H1 (cell line): ENCODE measurements at regions of chr1 and their contacts with region 1.

Region 1: DNA sequence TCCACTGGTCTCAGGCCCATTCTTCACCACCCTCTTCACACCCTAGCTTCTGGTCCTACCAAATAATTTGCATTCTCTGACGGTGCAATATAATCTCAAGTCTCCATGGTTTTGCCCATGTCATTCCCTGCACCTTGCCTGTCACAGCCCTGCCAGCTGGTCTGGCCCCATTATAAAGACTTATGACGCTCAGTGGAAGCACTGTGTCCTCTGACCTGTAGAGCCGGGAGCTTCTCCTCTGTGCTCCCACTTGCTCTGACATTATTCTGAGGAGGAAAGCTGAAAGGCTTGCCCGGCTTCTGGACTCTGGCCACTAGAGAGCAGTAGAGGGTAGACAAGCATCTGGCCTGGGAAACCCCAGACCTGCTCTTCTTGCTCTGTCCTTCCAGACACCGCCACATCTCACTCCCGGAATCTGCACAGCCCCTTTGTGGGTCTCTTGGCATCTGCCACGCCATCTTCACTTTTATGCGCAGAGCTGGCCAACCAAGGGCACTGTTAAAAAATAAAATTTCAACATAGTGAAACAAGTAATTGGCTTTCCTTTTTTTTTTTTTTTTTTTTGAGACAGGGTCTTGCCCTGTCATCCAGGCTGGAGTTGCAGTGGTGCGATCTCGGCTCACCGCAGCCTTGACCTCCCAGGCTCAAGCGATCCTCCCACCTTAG is 44.4 kb downstream of the NENF start:
- DNase-seq: peak; percentile 67 to 81
- H3K4me3 ChIP-seq: no peak overlapping the region
- H3K27ac ChIP-seq: no peak overlapping the region
- H3K4me1 ChIP-seq: peaks cover 0 to 2% (median 0%) of the 10 kb centered on the region in 4 experiments; a peak in 1 of 7 replicates
- H3K27me3 ChIP-seq: no peaks in the 10 kb centered on the region
- CTCF ChIP-seq: peak; percentile 75 to 95 (median 93)
- EP300 ChIP-seq: no peak
- POLR2A ChIP-seq: no peak
- RAD21 ChIP-seq: peak; percentile 94 to 97

Region 2: DNA sequence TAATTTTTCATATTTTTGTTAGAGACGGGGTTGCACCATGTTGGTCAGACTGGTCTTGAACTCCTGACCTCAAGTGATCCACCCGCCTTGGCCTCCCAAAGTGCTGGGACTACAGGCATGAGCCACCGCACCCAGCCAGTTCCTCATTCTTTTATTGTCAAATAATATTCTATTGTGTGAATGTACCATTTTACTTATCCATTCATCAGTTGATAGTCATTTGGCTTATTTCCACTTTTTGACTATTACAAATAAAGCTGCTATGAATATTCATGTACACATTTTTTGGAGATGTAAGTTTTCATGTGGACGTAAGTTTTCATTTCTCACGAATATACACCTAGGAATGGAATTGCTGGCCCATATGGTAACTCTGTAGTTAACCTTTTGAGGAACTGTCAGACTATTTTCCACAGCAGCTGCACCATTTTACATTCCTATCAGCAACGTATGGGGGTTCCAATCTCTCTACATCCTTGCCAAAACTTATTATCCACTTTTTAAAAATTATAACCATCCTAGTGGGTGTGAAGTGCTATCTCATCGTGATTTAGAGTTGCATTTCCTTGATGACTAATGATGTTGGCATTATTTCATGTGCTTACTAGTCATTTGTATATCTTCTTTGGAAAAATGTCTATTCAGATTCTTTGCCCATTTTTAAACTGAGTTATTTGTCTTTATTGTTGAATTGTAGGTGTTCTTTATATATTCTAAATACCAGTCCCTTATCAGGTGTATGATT is 75.1 kb before region 1 on chr1:
- CTCF ChIA-PET with region 1: no interaction called
- POLR2A ChIA-PET with region 1: no interaction called
- DNase-seq: no peak
- H3K4me3 ChIP-seq: no peak overlapping the region
- H3K27ac ChIP-seq: no peak overlapping the region
- H3K4me1 ChIP-seq: no peaks in the 10 kb centered on the region
- H3K27me3 ChIP-seq: no peaks in the 10 kb centered on the region
- CTCF ChIP-seq: no peak
- EP300 ChIP-seq: no peak
- POLR2A ChIP-seq: no peak
- RAD21 ChIP-seq: no peak

Region 3: DNA sequence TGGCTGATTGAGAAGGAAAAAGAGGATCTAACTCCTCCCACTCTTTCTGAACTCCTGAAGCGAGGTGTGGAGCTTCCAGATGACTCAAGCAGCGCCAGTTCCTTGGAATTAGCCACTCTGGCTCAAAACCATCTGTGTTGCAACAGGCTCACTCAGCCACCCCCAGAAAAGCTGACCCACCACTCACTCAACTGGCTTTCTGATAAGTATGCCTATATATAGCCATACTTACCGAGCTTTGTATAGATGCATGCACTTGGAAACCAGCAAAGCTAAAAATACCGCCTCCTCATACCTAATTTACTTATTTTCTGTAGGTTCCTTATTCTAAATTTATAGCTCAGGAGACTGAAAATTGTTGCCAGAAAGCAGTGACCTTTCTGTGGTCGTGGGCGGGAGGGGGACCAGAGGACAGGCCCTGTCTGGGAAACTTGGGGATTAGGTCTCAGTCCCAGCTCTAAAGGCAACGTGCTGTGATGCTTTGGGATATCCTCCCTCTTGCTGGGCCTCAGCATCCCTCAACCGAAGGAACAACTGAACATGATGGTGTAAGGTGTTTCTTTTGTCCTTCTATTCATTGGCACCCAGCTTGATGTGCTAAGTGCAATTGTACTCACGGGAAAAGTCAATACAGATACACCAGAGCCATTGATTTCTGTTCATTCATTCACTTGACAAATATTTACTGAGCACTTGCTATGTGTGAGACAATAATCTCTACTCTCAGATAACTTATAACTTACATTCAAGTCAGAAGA is 21.3 kb after region 1 on chr1:
- CTCF ChIA-PET with region 1: interaction called, 21 read pairs
- POLR2A ChIA-PET with region 1: no interaction called
- DNase-seq: no peak
- H3K4me3 ChIP-seq: no peak overlapping the region
- H3K27ac ChIP-seq: no peak overlapping the region
- H3K4me1 ChIP-seq: no peaks in the 10 kb centered on the region
- H3K27me3 ChIP-seq: no peaks in the 10 kb centered on the region; a peak in 1 of 7 replicates
- CTCF ChIP-seq: no peak
- EP300 ChIP-seq: no peak
- POLR2A ChIP-seq: no peak
- RAD21 ChIP-seq: no peak

Region 4: DNA sequence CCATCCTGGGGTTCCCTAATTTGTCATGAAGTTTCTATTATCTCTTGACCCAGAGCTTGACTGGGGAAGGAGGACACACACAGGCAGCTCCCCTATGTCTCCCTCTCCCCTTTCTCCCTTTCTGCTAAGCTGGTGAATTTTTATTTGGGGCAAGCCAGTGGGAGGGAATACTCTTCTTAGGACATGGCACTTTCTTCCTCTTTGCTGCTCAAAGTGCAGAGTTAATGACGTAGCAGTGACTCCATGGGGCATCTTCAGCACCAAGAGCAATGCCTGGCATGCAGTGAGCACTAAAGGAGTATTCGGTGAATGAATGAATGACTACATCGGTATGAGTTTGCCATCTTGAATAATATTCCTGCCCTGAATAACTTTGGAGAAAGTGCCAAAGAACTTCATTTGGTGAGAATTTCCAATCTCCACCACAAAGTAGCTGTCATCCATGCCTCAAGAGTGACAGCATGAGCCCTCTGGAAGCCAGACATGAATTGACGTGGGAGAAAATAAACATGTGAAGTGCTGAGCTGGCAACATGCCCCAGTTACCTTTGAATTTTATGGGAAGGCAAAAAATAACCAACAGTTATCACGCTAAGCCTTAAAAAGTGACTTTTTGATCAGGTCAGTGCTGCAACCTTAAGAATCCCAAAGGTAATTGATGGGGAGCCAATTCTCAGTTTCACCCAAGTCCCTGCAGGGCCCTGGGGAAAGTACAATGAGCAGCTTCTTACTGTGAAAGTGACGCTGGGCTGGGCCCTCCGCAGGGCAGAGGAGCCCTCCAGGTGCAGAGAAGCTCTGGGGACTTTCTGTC is 109.3 kb after region 1 on chr1:
- CTCF ChIA-PET with region 1: interaction called, 12 read pairs
- POLR2A ChIA-PET with region 1: no interaction called
- DNase-seq: no peak
- H3K4me3 ChIP-seq: no peak overlapping the region
- H3K27ac ChIP-seq: no peak overlapping the region
- H3K4me1 ChIP-seq: peaks cover 0 to 9% (median 5%) of the 10 kb centered on the region in 4 experiments; a peak in 4 of 7 replicates
- H3K27me3 ChIP-seq: no peaks in the 10 kb centered on the region
- CTCF ChIP-seq: no peak
- EP300 ChIP-seq: no peak
- POLR2A ChIP-seq: no peak
- RAD21 ChIP-seq: no peak

Region 5: GRCh38 chr1:212613455-212614390 is 136.6 kb after region 1 on chr1:
- CTCF ChIA-PET with region 1: interaction called, 13 read pairs
- POLR2A ChIA-PET with region 1: interaction called, 56 read pairs
- DNase-seq: no peak
- H3K4me3 ChIP-seq: no peak overlapping the region
- H3K27ac ChIP-seq: no peak overlapping the region
- H3K4me1 ChIP-seq: peaks cover 8 to 31% (median 19%) of the 10 kb centered on the region in 4 experiments; a peak in 6 of 7 replicates
- H3K27me3 ChIP-seq: peaks cover 0 to 14% (median 6%) of the 10 kb centered on the region in 4 experiments; a peak in 3 of 7 replicates
- CTCF ChIP-seq: no peak
- EP300 ChIP-seq: no peak
- POLR2A ChIP-seq: peak; percentile 23 to 53; a peak in 2 of 3 replicates
- RAD21 ChIP-seq: no peak

Region 6: DNA sequence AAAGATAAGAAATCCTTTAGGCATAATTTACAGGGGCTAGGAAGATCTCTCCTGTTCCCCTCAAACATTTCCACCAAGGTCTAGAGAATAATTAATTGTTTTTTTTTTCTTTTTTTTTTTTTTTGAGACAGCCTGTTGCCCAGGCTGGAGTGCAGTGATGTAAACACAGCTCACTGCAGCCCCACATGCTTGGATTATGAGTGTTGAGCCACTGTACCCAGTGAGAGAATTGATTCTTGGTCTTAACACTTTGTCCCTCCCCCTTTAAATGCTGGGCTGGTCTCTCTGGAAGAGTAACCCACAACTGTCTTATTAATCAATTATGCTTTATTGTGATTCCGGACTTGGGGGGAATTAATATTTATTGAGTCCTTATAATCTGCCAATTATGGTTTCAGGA is 164.8 kb after region 1 on chr1:
- CTCF ChIA-PET with region 1: interaction called, 13 read pairs
- POLR2A ChIA-PET with region 1: no interaction called
- DNase-seq: no peak
- H3K4me3 ChIP-seq: no peak overlapping the region
- H3K27ac ChIP-seq: no peak overlapping the region
- H3K4me1 ChIP-seq: peaks cover 0 to 7% (median 2%) of the 10 kb centered on the region in 4 experiments; a peak in 2 of 7 replicates
- H3K27me3 ChIP-seq: no peaks in the 10 kb centered on the region; a peak in 1 of 7 replicates
- CTCF ChIP-seq: no peak
- EP300 ChIP-seq: no peak
- POLR2A ChIP-seq: no peak
- RAD21 ChIP-seq: no peak

Region 7: GRCh38 chr1:212749821-212750535 is 272.8 kb after region 1 on chr1:
- CTCF ChIA-PET with region 1: no interaction called
- POLR2A ChIA-PET with region 1: no interaction called
- DNase-seq: no peak
- H3K4me3 ChIP-seq: no peak overlapping the region
- H3K27ac ChIP-seq: no peak overlapping the region
- H3K4me1 ChIP-seq: peaks cover 0 to 10% (median 8%) of the 10 kb centered on the region in 4 experiments; a peak in 5 of 7 replicates
- H3K27me3 ChIP-seq: no peaks in the 10 kb centered on the region
- CTCF ChIP-seq: peak in 2 of 3 experiments; percentile 68 to 80; a peak in 3 of 4 replicates
- EP300 ChIP-seq: no peak
- POLR2A ChIP-seq: no peak
- RAD21 ChIP-seq: peak; percentile 48 to 64